B cell (primary cell): ENCODE measurements at regions of chr20 and their contacts with region 1.

Region 1: DNA sequence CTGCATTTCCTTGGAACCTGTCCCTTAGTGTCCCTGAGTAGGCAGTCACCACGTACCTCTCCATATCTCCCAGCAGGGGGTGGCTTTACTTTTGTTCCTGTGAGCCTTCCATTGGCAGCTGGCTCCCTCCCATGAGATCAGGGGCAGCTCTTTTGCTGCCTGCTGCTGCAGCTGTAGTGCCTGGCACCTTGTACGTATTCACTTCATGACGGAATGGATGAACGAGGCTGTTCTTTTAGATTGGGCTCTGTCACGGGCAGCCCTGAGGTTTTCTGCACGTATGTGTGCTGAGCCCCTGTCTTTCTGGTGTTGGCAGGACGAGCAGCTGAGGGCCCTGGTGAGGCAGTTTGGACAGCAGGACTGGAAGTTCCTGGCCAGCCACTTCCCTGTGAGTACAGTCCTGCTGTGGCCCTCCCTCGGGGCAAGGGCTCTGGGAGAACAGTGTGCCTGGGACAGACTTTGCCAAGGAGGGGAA is 14.6 kb downstream of the MYBL2 start:
- DNase-seq: peak; percentile 83
- ATAC-seq: peak; percentile 37
- H3K4me3 ChIP-seq: peak overlapping the region; percentile 11 to 68 (median 43)
- H3K4me3 Mint-ChIP-seq: peak overlapping the region; percentile 70
- H3K27ac ChIP-seq: peak overlapping the region; percentile 98 to 99
- H3K27ac Mint-ChIP-seq: peak overlapping the region; percentile 97
- H3K4me1 ChIP-seq: peaks cover 38 to 60% of the 10 kb centered on the region in 2 donors
- H3K4me1 Mint-ChIP-seq: peaks cover 51% of the 10 kb centered on the region
- H3K27me3 ChIP-seq: no peaks in the 10 kb centered on the region
- H3K27me3 Mint-ChIP-seq: no peaks in the 10 kb centered on the region
- CTCF ChIP-seq: peak; percentile 51

Region 2: DNA sequence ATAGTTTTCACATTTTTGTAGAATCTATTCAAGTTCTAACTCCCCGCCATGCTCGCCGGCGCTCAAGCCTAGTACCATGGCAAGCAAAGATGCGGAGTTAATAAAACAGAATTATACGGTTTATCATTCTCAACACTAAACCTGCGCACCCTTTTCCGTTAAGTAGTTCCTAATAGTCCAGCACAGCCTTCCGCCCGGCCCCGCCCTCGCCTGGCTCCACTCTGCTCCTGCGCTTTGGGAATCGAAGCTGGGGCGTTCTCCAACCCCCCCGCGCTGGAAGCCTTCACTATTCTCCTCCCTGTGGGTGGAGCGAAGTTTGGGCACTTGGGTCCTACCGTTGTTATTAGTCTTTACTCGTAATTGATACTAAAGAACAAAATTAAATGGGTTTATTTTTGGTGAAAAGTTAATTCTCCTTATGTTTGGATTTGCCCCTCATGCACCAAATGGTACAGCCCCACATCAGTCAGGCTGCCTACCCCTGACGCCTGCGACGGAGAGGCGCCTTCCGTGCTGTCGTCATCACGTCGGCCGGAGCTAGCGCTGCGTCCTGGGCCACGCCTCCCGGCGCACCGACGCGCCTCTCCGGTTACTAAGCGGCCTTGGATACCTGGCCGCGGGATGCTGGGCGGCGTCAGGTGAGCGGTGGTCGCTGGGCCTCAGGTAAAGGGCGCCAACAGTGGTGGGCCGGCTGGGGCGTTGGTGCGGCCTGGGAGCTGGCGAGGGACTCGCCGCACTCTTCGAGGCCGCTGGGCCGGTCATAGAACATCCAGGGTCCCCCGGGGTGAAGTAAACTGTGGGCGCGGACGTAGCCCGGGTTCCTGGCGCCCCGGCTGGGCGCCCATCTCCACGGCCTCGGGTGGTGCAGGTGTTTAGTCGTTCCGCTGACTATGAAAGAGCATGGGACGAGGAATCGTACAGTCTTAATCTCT is 90.8 kb before region 1 on chr20 and contains the start of gene IFT52:
- CTCF ChIA-PET with region 1: interaction called, 5 read pairs
- POLR2A ChIA-PET with region 1: interaction called, 10 read pairs
- intact Hi-C with region 1: loop called (anchors 1 kb)
- DNase-seq: peak; percentile 94
- ATAC-seq: peak; percentile 97
- H3K4me3 ChIP-seq: peak within 1 kb of the TSS; percentile 67 to 80 (median 75)
- H3K4me3 Mint-ChIP-seq: peak within 1 kb of the TSS; percentile 93
- H3K27ac ChIP-seq: peak within 1 kb of the TSS; percentile 66 to 92
- H3K27ac Mint-ChIP-seq: peak within 1 kb of the TSS; percentile 95
- H3K4me1 ChIP-seq: peaks cover 9 to 15% of the 10 kb centered on the region in 2 donors
- H3K4me1 Mint-ChIP-seq: peaks cover 18% of the 10 kb centered on the region
- H3K27me3 ChIP-seq: no peaks in the 10 kb centered on the region
- H3K27me3 Mint-ChIP-seq: peaks cover 5% of the 10 kb centered on the region
- CTCF ChIP-seq: no peak
- total RNA-seq, gene IFT52: 16.7 and 23.7 TPM in 2 replicates